AG04449 (cell line): ENCODE measurements at regions of chr2 and their contacts with region 1.

Region 1: DNA sequence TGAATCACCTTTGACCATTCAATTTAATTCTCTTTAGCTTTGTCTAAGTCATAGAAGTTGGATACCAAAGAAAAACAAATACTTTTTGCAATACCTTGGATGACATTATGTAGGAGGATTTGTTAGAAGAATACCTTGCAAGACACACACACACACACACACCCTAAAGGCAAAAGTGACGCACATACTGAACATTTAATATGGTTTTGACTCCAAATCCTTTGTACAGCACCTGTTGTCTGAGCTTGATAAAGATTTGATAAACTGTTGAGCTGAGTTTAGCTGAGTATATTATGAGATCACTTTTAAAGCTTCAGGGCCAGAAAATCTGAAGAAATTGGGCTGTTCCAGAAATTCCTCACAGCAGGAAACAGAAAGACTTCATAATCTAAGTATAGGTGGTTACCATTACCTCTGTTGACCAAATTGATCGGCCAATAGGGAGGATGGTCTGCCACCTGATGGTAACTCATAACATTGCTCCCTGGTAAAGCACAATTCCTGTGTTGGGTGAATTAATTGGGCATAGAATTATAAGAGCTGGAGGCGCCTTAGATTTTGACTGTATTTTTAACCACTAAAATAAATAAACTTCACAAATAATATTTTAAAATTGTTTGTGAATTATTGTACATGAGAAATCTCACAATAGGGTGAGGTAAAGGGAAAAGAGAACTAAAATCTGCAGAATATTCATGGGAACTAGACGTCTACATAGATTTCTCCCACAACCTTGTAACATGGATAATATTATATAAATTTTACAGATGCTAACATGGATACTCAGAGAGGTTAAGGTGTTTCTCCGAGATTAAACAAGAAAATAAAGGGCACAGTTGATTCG is 21.9 kb upstream of the RPIA start:
- DNase-seq: no peak
- H3K4me3 ChIP-seq: no peak overlapping the region
- CTCF ChIP-seq: peak; percentile 63

Region 2: GRCh38 chr2:88469202-88470114 is 200.1 kb before region 1 on chr2:
- CTCF ChIA-PET with region 1: no interaction called
- POLR2A ChIA-PET with region 1: no interaction called
- DNase-seq: no peak
- H3K4me3 ChIP-seq: no peak overlapping the region
- CTCF ChIP-seq: no peak

Region 3: DNA sequence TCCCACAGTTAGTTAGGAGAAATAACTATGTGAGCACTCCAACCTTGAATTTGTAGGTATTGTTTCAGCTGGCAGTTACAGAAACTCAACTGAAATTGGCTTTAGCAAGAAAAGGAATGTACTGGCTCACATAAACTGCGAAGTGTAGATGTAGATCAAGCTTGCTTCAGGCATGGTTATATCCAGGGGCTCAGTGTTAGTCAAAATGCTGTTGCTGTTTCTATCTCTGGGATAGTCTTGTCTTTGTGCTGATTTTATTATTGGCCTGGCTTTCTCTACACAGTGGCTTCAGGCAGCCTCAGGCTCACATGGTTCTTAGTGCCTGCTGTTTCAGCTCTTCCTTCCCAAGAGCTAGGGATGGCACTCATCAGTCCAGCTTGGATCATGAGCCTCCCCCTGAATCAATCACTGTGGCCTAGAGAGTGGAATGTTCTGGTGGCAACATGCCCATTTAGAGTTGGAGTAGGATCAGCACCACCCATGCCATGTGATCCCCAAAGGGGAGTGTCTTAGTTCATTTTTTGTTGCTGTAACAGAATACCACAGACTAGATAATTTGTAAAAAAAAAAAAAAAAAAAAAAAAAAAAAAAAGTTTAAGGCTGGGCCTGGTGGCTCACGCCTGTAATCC is 148.0 kb before region 1 on chr2:
- CTCF ChIA-PET with region 1: no interaction called
- POLR2A ChIA-PET with region 1: no interaction called
- DNase-seq: no peak
- H3K4me3 ChIP-seq: no peak overlapping the region
- CTCF ChIP-seq: no peak

Region 4: DNA sequence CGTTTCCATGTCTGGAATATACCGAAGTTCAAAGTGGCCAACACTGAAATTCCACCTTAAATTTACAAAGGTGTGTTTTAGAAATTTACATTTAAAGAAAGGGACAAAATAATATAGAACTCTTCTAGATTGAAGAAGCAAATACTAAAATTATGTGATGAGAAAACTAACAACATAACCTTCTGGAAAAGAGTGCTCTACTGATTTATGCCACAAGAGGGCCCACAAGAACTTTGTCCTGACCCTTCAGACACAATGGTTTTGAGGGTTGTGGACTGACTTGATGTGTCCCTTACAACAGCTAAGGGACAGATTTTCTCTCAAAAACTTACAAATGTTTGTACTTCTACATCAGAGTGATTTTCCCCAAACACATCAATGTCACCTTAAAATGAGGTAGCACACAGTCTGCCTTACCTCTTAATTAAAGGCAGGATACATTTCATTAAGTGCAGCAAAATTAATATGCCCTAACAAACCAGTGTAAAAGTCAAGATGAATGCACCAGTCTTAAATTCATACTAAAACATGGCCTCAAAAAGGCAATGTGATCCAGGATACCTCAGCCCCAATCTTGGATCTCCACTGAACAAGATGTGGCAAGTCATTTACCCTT is 78.5 kb before region 1 on chr2:
- CTCF ChIA-PET with region 1: interaction called, 692 read pairs
- POLR2A ChIA-PET with region 1: no interaction called
- DNase-seq: peak; percentile 17
- H3K4me3 ChIP-seq: no peak overlapping the region
- CTCF ChIP-seq: peak; percentile 69

Region 5: GRCh38 chr2:88606371-88607030 is 63.1 kb before region 1 on chr2:
- CTCF ChIA-PET with region 1: interaction called, 28 read pairs
- POLR2A ChIA-PET with region 1: no interaction called
- DNase-seq: no peak
- H3K4me3 ChIP-seq: no peak overlapping the region
- CTCF ChIP-seq: no peak

Region 6: GRCh38 chr2:88659538-88659916 is 10.1 kb before region 1 on chr2:
- CTCF ChIA-PET with region 1: interaction called, 145 read pairs
- POLR2A ChIA-PET with region 1: no interaction called
- DNase-seq: no peak
- H3K4me3 ChIP-seq: no peak overlapping the region
- CTCF ChIP-seq: no peak

Region 7: GRCh38 chr2:88686320-88686719 is 16.7 kb after region 1 on chr2:
- CTCF ChIA-PET with region 1: interaction called, 34 read pairs
- POLR2A ChIA-PET with region 1: interaction called, 6 read pairs
- DNase-seq: no peak
- H3K4me3 ChIP-seq: no peak overlapping the region
- CTCF ChIP-seq: no peak